ENCODE measurements at regions of chr3 and their contacts with region 1.

Region 1: DNA sequence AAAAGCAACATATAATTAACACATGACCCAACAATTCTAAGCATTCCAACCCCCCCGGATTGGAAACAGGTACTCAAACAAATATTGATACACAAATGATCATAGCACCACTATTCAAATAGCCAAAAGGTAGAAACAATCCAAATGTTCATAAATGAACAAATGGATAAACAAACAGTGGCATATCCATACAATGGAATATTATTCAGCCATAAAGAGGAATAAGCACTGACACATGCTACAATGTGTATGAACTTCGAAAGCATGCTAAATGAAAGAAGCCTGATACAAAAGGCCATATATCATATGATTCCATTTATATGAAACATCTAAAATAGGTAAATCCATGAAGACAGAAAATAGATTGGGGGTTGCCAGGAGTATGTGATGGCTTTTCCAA is 62.8 kb downstream of the XRN1 start:
- DNase-seq: no peak
- ATAC-seq: no peak
- H3K4me3 ChIP-seq: no peak overlapping the region
- H3K4me3 Mint-ChIP-seq: no peak overlapping the region
- H3K27ac ChIP-seq: no peak overlapping the region
- H3K27ac Mint-ChIP-seq: no peak overlapping the region
- H3K4me1 ChIP-seq: no peaks in the 10 kb centered on the region
- H3K4me1 Mint-ChIP-seq: no peaks in the 10 kb centered on the region
- H3K27me3 ChIP-seq: no peaks in the 10 kb centered on the region
- H3K27me3 Mint-ChIP-seq: no peaks in the 10 kb centered on the region

Region 2: DNA sequence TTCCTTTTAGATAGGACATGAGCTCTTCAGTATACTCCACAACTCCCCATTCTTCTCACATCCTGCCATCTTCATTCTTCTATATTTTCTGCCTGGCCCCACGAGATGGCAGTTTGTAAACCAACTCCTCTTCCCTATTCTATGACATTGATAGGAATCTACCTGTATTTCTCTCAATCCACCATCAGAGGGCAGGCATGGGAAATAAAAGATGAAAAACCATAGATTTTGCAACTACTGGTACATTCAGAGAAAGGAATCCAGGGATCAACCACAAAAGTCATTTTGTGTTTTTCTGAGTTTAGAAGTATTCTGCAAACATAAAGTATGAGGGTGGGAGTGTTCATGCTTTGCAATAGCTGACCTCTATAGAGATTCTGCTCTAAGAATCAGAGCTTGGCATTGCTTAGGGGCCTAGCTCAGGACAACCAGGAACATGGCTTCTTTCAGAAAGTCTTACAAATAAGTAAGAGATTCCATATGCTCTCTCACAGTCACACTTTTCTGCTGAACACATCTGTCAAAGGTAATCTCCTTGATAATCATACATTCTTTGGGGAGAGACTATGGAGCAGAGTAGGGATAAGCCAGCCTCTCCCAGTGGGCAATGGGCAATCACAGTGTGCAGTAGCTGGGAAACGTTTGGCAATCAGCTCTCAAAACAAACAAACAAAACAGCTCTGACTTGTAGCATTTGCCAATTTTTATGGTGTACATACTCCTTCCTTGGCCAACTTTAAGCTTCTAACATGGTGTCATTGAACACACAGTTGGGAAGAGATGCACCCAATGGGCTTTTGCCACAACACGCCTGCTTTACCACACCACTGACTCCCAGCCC is 1486.5 kb before region 1 on chr3:
- CTCF ChIA-PET with region 1: no interaction called
- POLR2A ChIA-PET with region 1: no interaction called
- DNase-seq: peak in 5 of 35 experiments; percentile 1 to 61 (median 6)
- ATAC-seq: peak in 2 of 4 experiments; percentile 52 to 65
- H3K4me3 ChIP-seq: no peak overlapping the region
- H3K4me3 Mint-ChIP-seq: no peak overlapping the region
- H3K27ac ChIP-seq: no peak overlapping the region
- H3K27ac Mint-ChIP-seq: no peak overlapping the region
- H3K4me1 ChIP-seq: no peaks in the 10 kb centered on the region
- H3K4me1 Mint-ChIP-seq: no peaks in the 10 kb centered on the region
- H3K27me3 ChIP-seq: peaks cover 0 to 10% of the 10 kb centered on the region in 2 experiments
- H3K27me3 Mint-ChIP-seq: peaks cover 17 to 29% of the 10 kb centered on the region in 2 donors

Region 3: GRCh38 chr3:142355692-142356091 is 29.4 kb before region 1 on chr3:
- CTCF ChIA-PET with region 1: no interaction called
- POLR2A ChIA-PET with region 1: interaction called, 5 to 11 read pairs
- DNase-seq: no peak
- ATAC-seq: no peak
- H3K4me3 ChIP-seq: no peak overlapping the region
- H3K4me3 Mint-ChIP-seq: no peak overlapping the region
- H3K27ac ChIP-seq: no peak overlapping the region
- H3K27ac Mint-ChIP-seq: no peak overlapping the region
- H3K4me1 ChIP-seq: no peaks in the 10 kb centered on the region
- H3K4me1 Mint-ChIP-seq: peaks cover 0 to 1% (median 0%) of the 10 kb centered on the region in 3 donors
- H3K27me3 ChIP-seq: no peaks in the 10 kb centered on the region
- H3K27me3 Mint-ChIP-seq: no peaks in the 10 kb centered on the region

Region 4: DNA sequence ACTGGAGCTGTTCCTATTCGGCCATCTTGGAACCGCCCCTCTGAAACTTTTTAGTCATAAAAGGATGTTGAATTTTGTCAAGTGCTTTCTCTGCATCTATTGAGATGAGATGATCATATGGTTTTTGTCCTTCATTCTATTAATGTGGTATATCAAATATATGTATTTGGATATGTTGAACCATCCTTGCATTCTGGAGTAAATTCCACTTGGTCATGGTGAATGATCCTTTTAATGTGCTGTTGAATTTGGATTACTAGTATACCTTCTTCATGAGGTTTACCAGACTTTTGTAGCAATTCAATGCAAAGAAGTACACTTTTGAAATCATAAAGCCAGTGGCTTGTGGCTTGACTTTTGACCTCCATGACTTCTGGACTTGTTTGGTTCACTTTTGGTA is 96.1 kb after region 1 on chr3:
- CTCF ChIA-PET with region 1: no interaction called
- POLR2A ChIA-PET with region 1: no interaction called
- DNase-seq: no peak
- ATAC-seq: no peak
- H3K4me3 ChIP-seq: no peak overlapping the region
- H3K4me3 Mint-ChIP-seq: no peak overlapping the region
- H3K27ac ChIP-seq: no peak overlapping the region
- H3K27ac Mint-ChIP-seq: no peak overlapping the region
- H3K4me1 ChIP-seq: no peaks in the 10 kb centered on the region
- H3K4me1 Mint-ChIP-seq: no peaks in the 10 kb centered on the region
- H3K27me3 ChIP-seq: no peaks in the 10 kb centered on the region
- H3K27me3 Mint-ChIP-seq: no peaks in the 10 kb centered on the region